Colonic mucosa (tissue), 4 donors: ENCODE measurements at regions of chr22 and their contacts with region 1.

Region 1: DNA sequence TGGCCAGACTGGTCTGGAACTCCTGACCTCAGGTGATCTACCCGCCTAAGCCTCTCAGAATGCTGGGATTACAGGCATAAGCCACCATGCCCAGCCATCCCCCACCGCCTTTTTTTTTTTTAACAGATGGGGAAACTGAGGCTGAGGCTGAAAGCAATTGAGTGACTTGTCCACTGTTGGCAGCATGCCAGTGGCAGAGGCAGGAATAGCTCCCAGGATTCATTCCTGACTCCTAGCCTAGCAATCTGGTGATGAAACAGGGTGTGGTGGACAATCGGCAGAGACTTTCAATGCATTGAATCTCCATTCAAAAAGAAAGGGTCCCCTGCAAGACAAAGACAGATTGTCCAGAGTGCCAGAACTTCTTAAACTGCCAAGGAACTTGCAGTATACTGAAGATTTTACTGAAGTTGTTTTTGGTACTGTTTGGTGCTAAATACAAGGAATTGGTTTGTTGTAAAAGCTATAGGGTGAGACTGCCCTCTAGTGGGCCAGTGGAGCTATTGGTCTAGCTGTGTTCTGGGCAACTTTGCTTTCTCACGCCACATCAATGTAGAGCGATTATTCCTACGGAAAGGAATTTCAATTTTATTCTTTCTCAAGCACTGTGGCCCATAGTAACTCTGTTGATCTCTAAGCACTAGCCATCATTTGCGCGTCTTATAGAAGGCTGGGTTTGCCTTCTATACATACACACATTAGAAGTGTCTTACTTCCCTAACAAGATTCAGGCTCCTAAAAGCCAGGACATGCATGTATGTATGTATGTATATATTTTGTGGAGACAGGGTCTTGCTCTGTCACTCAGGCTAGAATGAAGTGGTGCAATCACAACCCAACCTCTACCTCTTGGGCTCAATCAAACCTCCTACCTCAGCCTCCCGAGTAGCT is 21.0 kb downstream of the C22orf31 start:
- DNase-seq: peak; percentile 76
- H3K4me3 ChIP-seq: no peak overlapping the region
- H3K27ac ChIP-seq: peak overlapping the region; percentile 9
- H3K4me1 ChIP-seq: no peaks in the 10 kb centered on the region
- H3K27me3 ChIP-seq: no peaks in the 10 kb centered on the region
- CTCF ChIP-seq: peak; percentile 98

Region 2: GRCh38 chr22:28855355-28856094 is 185.1 kb before region 1 on chr22:
- intact Hi-C with region 1: loop called (anchors 2 kb)
- DNase-seq: peak; percentile 76
- H3K4me3 ChIP-seq: no peak overlapping the region
- H3K27ac ChIP-seq: no peak overlapping the region
- H3K4me1 ChIP-seq: no peaks in the 10 kb centered on the region
- H3K27me3 ChIP-seq: no peaks in the 10 kb centered on the region
- CTCF ChIP-seq: peak; percentile 93

Region 3: GRCh38 chr22:29154364-29155048 is 113.9 kb after region 1 on chr22:
- intact Hi-C with region 1: loop called (anchors 10 kb)
- DNase-seq: peak; percentile 74
- H3K4me3 ChIP-seq: no peak overlapping the region
- H3K27ac ChIP-seq: no peak overlapping the region
- H3K4me1 ChIP-seq: no peaks in the 10 kb centered on the region
- H3K27me3 ChIP-seq: no peaks in the 10 kb centered on the region
- CTCF ChIP-seq: peak; percentile 95

Region 4: DNA sequence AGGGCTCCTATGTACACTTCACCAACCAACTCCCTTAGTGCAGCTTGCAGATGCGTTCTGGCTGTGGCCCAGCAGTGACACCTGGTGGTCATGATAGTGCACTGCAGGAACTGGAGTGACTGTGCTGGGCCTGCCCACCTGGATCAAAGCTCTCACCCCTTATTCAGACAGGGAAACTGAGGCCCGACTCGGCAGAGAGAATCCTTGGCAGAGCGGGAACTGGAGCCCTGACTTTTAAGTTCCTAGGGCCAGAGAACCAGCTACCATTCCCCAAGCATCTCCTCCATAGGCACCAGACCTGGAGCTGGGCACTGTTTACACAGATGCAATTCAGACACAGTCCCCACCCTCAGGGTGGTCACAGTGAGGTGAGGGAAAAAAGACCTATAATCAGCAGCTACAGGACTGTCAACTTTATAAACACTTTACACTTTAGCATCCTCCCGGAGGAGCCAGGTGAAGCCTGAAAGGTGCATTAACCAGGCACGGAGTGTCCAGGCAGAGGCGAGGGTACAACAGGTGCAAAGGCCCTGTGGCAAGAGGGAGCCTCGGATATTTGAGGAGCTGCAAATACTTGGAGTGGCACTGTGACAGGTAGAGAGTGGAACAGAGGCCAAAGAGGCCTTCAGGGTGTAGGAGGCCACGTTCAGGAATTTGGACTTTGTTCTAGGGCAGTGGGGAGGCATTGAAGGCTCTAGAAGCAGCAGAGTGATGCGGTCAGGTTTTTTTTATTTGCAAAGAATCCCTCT is 205.2 kb after region 1 on chr22:
- intact Hi-C with region 1: loop called (anchors 10 kb)
- DNase-seq: peak; percentile 69
- H3K4me3 ChIP-seq: no peak overlapping the region
- H3K27ac ChIP-seq: no peak overlapping the region
- H3K4me1 ChIP-seq: no peaks in the 10 kb centered on the region
- H3K27me3 ChIP-seq: no peaks in the 10 kb centered on the region
- CTCF ChIP-seq: peak; percentile 97